Dorsolateral prefrontal cortex (tissue), 120 donors: ENCODE measurements at regions of chr4 and their contacts with region 1.

Region 1: DNA sequence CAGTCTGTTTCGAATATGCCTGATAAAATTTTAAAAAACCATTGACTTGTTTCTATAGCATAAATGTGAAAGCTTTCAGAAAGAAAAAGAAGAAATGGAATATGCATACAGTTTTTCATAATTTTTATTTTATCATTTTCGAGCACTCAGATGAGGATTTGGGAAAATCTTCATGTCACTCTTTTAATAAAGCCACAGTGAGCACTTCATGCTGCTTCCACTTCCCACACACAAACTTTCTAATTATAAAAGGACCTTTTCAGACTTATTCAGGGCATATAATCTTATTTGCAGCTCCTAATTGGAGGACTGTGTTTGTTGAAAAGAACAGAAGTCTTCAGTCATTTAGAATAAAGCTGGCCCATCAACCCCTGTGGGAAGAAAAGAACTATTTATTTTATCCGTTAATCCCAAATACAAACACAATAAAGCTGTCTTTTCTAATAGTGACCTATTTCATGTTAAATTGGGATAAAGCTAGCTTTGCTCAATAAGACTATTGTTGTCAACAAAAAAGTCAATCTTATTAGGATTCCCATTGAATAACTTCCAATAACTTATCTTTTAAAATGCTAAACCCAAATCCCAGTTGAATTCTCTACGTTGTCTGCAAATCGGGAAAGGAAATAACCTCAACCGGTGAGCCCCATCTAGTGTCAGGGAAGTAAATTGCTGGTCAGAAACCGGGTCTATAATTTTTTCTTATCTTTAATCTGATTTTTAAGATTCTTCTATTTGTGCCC is 211.5 kb downstream of the PDGFRA start:
- DNase-seq: no peak
- H3K4me3 ChIP-seq: peak overlapping the region in 45 of 59 donors; percentile 1 to 50 (median 28)
- H3K27ac ChIP-seq: peak overlapping the region in 50 of 59 donors; percentile 1 to 84 (median 57)
- H3K27me3 ChIP-seq: peaks cover 0 to 6% (median 0%) of the 10 kb centered on the region in 45 donors
- CTCF ChIP-seq: peak; percentile 33 to 86 (median 75)

Region 2: GRCh38 chr4:54384563-54384962 is 56.0 kb before region 1 on chr4:
- intact Hi-C with region 1: loop called in 1 of 2 experiments (anchors 5 kb)
- DNase-seq: peak in 7 of 10 donors; percentile 22 to 61 (median 56)
- H3K4me3 ChIP-seq: no peak overlapping the region
- H3K27ac ChIP-seq: no peak overlapping the region
- H3K27me3 ChIP-seq: no peaks in the 10 kb centered on the region
- CTCF ChIP-seq: peak; percentile 12 to 75 (median 55)

Region 3: DNA sequence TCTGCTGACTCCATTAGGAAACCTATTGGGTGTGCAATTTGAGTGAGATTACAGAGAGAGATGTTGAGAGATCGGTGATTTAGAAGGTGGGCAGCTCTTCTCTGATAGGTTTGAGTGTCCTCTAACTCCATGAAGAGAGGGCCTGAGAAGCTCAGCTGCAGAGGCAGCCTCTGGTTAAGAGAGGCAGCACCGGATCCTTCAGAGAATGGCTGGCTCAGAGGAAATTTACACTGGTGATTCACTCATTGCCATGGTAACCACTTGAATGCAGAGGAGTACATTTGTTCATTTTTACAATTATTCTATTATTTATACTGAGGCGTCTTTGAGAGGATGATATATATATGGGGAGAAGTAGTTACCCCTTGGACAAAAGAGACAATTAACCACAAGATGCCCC is 39.8 kb before region 1 on chr4:
- intact Hi-C with region 1: loop called in 1 of 2 experiments (anchors 5 kb)
- DNase-seq: peak in 5 of 10 donors; percentile 24 to 66 (median 49)
- H3K4me3 ChIP-seq: peak overlapping the region in 1 of 59 donors; percentile 18
- H3K27ac ChIP-seq: peak overlapping the region in 52 of 59 donors; percentile 1 to 82 (median 60)
- H3K27me3 ChIP-seq: no peaks in the 10 kb centered on the region
- CTCF ChIP-seq: peak in 1 of 56 donors; percentile 17

Region 4: GRCh38 chr4:54840992-54841768 is 400.6 kb after region 1 on chr4:
- intact Hi-C with region 1: loop called in 1 of 2 experiments (anchors 10 kb)
- DNase-seq: peak in 4 of 10 donors; percentile 15 to 47 (median 38)
- H3K4me3 ChIP-seq: no peak overlapping the region
- H3K27ac ChIP-seq: peak overlapping the region in 4 of 59 donors; percentile 10 to 42 (median 20)
- H3K27me3 ChIP-seq: no peaks in the 10 kb centered on the region
- CTCF ChIP-seq: peak in 35 of 56 donors; percentile 16 to 57 (median 32)